Left colon (tissue), 2 donors: ENCODE measurements at regions of chr6 and their contacts with region 1.

Region 1: DNA sequence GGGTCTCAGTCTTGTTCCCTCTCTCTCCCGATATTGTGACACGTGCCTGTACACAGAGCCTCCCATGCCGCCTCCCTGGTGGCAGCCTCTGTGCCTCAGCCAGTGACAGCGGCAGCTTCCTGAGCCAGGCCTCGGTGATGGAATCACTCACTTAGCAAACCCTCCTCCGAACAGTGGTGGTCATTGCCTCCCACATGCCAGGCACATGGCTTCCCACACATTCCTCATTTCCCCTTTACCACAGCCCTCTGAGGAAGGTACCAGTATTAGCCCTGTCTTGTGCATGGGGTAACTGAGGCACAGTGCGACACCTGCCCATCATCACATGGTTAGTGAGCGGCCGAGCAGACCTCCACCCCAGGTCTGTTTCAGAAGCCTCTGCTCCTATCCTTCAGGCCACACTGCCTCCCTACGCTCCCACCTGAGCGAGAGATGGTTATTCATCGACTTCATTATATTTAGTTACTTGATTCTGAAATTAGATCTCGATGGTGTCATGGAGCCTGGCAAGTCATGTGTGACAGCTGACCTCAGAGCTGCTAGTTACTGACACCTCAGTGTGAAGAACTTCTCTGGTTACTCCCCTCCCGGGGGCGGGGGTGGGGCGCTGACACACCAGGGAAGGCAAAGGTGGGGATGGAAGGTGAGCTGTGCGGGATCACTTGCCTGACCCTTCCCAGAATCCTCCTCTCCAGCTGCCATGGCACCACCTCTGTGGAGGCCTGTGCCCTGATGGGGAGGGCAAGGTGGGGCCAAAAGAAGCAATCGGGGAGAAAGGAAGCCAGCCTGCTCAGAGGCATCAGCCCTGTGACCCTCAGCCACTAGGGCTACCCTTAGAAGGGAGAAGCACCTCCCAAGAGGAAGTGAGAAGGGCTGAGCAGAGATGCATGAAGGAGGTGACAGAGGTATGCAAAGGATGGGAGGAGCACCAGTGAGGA is 17.9 kb downstream of the MDGA1 start:
- DNase-seq: no peak
- ATAC-seq: no peak

Region 2: DNA sequence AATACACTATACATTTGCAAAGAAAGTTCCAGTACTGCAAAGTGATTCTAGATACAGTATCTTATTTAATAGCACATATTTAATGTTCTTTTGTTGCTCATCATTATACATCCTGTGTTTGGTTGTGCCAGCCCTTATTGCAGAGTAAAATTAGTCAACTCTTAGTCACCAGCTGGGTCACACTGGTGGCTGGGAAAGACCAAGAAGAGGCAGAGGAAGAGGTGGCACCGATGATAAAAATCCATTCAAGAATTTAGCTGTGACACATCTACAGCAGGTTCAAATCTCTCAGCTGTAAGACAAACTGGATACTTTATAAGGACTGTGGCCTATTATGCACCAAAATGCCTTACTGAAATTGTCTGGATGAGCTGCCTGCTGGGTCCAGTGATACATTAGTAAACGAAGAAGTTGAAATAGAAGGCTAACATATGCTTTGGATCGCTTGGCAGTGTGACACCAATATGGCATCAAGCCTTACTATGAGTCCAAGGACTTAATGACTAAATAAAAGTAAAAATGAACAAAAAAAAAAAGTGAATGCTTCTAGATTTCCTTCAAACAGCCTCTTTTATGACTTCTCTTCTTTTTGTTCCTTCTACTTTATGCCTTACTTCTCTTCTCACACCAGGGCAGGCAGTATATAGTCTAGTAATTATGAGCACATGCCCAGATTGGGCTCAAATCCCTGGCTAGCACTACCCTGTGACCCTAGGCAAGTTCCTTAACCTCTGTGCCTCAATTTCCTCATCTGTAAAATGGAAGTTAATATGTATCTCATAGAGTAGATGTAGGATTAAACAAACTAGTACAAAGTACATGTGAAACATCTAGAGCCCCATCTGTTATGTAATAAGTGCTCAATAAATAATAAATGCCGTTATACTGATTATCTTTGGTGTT is 355.4 kb before region 1 on chr6:
- intact Hi-C with region 1: loop called in 1 of 2 experiments (anchors 10 kb)
- DNase-seq: no peak
- ATAC-seq: peak; percentile 21

Region 3: DNA sequence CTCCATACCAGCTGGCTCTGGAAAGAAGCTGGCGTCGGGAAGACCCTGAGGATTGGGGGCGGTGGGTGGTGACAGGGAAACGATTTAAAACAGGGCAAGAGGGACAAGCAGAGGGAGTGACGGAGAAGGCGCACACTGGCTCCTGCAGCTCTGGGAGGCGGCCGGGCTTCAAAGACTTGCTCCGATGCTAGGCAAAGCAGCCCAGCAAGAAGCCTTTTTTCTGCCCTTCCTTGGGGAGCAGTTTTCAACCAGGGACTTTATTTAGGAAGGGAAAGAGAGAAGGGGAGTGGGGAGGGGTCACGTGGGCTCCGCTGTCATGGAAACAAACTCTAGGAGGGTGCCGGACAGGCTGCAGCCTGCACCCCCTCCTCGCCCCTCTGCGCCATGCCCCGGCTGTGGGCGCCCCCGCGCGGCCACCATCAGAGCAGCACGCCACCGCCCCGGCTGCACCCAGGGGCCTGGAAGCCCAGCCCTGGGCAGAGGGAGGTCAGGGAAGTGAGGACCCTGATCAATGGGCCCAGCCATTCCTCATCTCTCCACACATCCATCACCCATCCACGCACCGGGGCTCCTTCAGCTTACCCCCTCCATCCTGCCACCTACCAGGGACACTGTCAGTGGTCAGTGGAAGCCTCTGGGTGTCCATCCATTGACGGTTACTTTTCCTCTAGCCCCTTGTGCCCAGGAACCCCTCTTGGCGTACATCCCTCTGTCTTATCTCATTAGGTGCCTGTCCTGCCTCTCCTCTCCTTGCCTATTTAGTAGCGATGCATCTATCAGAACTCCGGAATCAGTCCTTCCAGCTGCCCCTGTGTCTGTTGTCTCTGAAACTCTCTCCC is 113.5 kb before region 1 on chr6:
- intact Hi-C with region 1: loop called in 1 of 2 experiments (anchors 10 kb)
- DNase-seq: peak in 1 of 2 donors; percentile 63
- ATAC-seq: peak; percentile 78